Activated CD4-positive, alpha-beta memory T cell treated with anti-CD3 and anti-CD28 coated beads for 36 hours (primary cell): ENCODE measurements at regions of chr1 and their contacts with region 1.

Region 1: GRCh38 chr1:32215629-32216480 is 6.3 kb downstream of the TMEM234 start:
- DNase-seq: peak; percentile 74
- H3K4me3 Mint-ChIP-seq: no peak overlapping the region
- H3K27ac Mint-ChIP-seq: peak overlapping the region; percentile 8
- H3K4me1 Mint-ChIP-seq: peaks cover 14% of the 10 kb centered on the region
- H3K27me3 Mint-ChIP-seq: no peaks in the 10 kb centered on the region

Region 2: GRCh38 chr1:31705080-31705866 is 510.6 kb before region 1 on chr1:
- CTCF ChIA-PET with region 1: no interaction called
- POLR2A ChIA-PET with region 1: no interaction called
- intact Hi-C with region 1: no loop called
- DNase-seq: peak; percentile 88
- H3K4me3 Mint-ChIP-seq: peak overlapping the region; percentile 17
- H3K27ac Mint-ChIP-seq: no peak overlapping the region
- H3K4me1 Mint-ChIP-seq: peaks cover 37% of the 10 kb centered on the region
- H3K27me3 Mint-ChIP-seq: peaks cover 30% of the 10 kb centered on the region

Region 3: DNA sequence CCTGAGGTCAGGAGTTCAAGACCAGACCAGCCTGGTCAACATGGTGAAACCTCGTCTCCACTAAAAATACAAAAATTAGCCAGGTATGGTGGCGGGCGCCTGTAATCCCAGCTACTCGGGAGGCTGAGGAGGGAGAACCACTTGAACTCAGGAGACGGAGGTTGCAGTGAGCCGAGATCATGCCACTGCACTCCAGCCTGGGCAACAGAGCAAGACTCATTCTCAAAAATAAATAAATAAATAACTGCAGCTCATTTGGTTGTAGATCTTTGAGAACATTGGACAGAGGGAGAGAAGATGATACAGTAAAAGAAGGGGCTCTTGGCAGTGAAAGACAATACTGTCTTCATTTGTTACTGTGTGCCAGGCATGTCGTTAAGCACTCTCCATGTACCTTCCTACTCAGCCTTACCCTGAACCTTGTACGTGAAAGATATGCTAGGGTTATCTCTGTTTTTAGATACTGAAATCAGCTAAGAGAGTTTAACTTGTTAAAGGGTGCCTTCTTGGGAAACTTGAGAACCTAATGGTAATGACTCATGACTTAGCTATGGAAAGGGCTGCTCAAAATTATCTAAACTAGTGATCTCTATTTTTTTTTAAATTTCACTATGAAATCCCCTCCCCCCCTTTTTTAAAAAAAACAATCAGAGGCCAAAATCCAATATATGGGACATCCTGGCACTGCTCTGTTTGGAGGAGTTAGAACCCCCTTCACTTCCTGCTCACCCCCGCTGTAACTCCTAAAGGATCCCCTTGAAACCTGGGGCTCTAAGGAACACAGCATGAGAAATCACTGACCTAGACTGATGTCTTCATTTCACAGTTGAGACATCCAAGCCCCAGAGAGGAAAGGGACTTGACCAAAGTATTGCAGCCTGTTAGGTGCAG is 114.8 kb before region 1 on chr1:
- CTCF ChIA-PET with region 1: no interaction called
- POLR2A ChIA-PET with region 1: no interaction called
- intact Hi-C with region 1: no loop called
- DNase-seq: no peak
- H3K4me3 Mint-ChIP-seq: no peak overlapping the region
- H3K27ac Mint-ChIP-seq: no peak overlapping the region
- H3K4me1 Mint-ChIP-seq: peaks cover 3% of the 10 kb centered on the region
- H3K27me3 Mint-ChIP-seq: no peaks in the 10 kb centered on the region

Region 4: DNA sequence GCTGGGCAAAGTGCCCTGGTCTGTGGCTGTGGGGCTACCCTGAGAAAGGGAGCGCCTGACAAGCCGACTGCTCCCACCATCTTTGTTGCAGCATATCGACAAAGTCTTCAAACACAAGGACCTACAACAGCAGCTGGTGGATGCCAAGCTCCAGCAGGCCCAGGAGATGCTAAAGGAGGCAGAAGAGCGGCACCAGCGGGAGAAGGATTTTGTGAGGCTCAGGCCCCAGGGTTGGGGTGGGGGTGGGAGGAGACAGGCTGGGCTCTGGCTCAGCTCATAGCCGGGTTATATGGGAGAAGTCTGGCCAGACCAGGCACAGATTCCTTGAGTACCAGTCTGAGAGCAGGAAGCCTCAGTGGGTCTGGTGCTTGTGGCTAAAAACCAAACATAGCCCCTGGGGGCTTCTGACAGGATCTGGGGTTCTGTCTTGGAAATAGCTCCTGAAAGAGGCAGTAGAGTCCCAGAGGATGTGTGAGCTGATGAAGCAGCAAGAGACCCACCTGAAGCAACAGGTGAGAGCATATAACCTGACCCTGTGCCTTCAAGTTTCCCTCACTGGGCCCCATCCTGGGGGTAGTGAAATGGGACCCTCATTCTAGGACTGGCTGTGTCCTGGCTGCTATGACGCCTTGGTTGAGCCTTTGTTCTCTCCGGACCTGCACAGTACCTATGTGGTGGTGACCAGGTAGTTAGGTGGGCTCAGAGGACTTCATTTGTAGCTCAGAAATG is 23.5 kb before region 1 on chr1:
- CTCF ChIA-PET with region 1: interaction called, 12 read pairs
- POLR2A ChIA-PET with region 1: no interaction called
- intact Hi-C with region 1: no loop called
- DNase-seq: no peak
- H3K4me3 Mint-ChIP-seq: no peak overlapping the region
- H3K27ac Mint-ChIP-seq: no peak overlapping the region
- H3K4me1 Mint-ChIP-seq: peaks cover 38% of the 10 kb centered on the region
- H3K27me3 Mint-ChIP-seq: no peaks in the 10 kb centered on the region

Region 5: GRCh38 chr1:32205401-32206370 is 10.2 kb before region 1 on chr1 and contains the start of gene IQCC:
- CTCF ChIA-PET with region 1: interaction called, 31 read pairs
- POLR2A ChIA-PET with region 1: interaction called, 19 read pairs
- intact Hi-C with region 1: no loop called
- DNase-seq: peak; percentile 92
- H3K4me3 Mint-ChIP-seq: peak within 1 kb of the TSS; percentile 89
- H3K27ac Mint-ChIP-seq: peak within 1 kb of the TSS; percentile 58
- H3K4me1 Mint-ChIP-seq: peaks cover 32% of the 10 kb centered on the region
- H3K27me3 Mint-ChIP-seq: no peaks in the 10 kb centered on the region
- total RNA-seq, gene IQCC: 4.5 to 5.2 TPM

Region 6: GRCh38 chr1:32351399-32352238 is 135.8 kb after region 1 on chr1:
- CTCF ChIA-PET with region 1: interaction called, 18 read pairs
- POLR2A ChIA-PET with region 1: no interaction called
- intact Hi-C with region 1: no loop called
- DNase-seq: peak; percentile 95
- H3K4me3 Mint-ChIP-seq: peak overlapping the region; percentile 79
- H3K27ac Mint-ChIP-seq: peak overlapping the region; percentile 81
- H3K4me1 Mint-ChIP-seq: peaks cover 34% of the 10 kb centered on the region
- H3K27me3 Mint-ChIP-seq: no peaks in the 10 kb centered on the region

Region 7: DNA sequence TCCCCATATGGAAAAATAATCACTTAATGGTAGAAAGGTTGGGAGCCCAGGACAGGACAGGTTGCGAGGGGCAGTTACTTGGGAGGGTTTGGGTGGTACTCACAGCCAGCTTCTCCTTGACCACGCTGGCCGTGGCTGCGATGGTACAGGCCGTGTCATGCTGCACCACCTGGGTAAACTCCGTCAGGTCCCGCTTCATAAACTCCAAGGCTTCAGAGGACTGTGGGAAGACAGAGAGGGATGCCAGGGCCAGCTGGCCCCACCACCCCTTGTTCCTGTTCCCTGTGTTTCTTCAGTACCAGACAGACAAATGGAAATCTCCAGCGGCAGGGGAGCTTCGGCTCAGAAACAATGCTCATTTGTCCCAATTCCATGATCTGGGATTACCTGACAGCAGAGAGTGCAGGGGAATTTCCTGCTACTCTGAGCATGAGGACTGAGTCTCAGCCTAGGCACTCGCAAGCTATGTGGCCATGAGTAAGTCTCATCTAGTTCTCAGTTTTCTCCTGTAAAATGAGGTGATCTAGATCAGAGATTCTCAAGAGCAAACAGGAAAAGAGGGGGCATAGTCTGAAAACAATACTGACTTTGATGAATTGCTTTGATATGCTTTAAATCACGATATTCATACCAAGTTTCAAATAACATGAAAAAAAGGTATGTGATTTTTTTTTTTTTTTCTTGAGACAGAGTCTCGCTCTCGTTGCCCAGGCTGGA is 171.0 kb after region 1 on chr1:
- CTCF ChIA-PET with region 1: interaction called, 14 read pairs
- POLR2A ChIA-PET with region 1: no interaction called
- intact Hi-C with region 1: no loop called
- DNase-seq: no peak
- H3K4me3 Mint-ChIP-seq: no peak overlapping the region
- H3K27ac Mint-ChIP-seq: no peak overlapping the region
- H3K4me1 Mint-ChIP-seq: peaks cover 3% of the 10 kb centered on the region
- H3K27me3 Mint-ChIP-seq: no peaks in the 10 kb centered on the region

Region 8: DNA sequence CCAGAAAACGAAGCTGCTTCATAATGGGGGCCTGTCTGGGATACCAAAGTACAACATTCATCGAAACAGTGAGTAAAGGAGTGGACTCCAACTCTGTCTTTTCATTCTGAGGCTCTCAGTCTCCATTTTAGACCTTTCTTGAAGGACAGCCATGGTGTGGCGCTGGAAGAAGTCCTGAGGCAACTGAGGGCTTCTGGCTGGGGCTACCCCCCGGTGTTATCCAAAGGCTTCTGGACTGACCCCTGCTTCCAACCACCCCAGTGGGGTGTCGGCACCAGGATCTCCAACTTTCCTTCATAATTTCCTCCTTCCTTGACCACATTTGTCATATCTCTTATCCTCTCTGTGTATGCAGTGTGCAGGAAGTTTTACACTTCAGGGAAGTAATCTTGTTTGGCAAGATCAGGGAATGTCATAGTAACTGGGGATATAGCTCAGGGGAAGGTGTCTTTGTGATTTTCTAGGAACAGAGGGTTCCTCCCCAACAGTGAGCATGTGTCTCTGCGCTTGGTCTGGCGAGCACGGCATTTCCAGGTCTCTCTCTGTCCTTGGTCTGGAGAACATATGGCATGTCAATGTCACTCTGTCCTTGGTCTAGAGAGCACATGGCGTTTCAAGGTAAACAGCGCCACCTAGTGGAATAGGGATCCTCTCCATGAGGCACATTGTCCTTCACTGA is 197.8 kb after region 1 on chr1:
- CTCF ChIA-PET with region 1: interaction called, 18 read pairs
- POLR2A ChIA-PET with region 1: no interaction called
- intact Hi-C with region 1: loop called (anchors 1 kb)
- DNase-seq: peak; percentile 78
- H3K4me3 Mint-ChIP-seq: no peak overlapping the region
- H3K27ac Mint-ChIP-seq: peak overlapping the region; percentile 38
- H3K4me1 Mint-ChIP-seq: peaks cover 4% of the 10 kb centered on the region
- H3K27me3 Mint-ChIP-seq: peaks cover 5% of the 10 kb centered on the region